ENCODE measurements at regions of chr9 and their contacts with region 1.

Region 1: GRCh38 chr9:76704593-76705204 is 59.5 kb upstream of the PCA3 start:
- DNase-seq: peak in 1 of 10 donors; percentile 61
- H3K4me3 ChIP-seq: peak overlapping the region in 1 of 59 donors; percentile 19
- H3K27ac ChIP-seq: peak overlapping the region in 9 of 59 donors; percentile 11 to 65 (median 37)
- H3K27me3 ChIP-seq: peaks cover 0 to 2% (median 0%) of the 10 kb centered on the region in 45 donors
- CTCF ChIP-seq: peak; percentile 66 to 93 (median 79)

Region 2: GRCh38 chr9:76393963-76394679 is 310.6 kb before region 1 on chr9 and contains the start of gene RFK:
- intact Hi-C with region 1: loop called in 1 of 2 experiments (anchors 10 kb)
- DNase-seq: peak; percentile 79 to 94 (median 88)
- H3K4me3 ChIP-seq: peak within 1 kb of the TSS; percentile 68 to 99 (median 92)
- H3K27ac ChIP-seq: peak within 1 kb of the TSS; percentile 60 to 98 (median 95)
- H3K27me3 ChIP-seq: no peaks in the 10 kb centered on the region
- CTCF ChIP-seq: peak in 55 of 56 donors; percentile 6 to 87 (median 60)
- total RNA-seq, gene RFK: 15.3 to 57.0 (median 37.1) TPM

Region 3: GRCh38 chr9:76403352-76403751 is 301.3 kb before region 1 on chr9:
- intact Hi-C with region 1: loop called (anchors 5 to 10 kb)
- DNase-seq: no peak
- H3K4me3 ChIP-seq: peak overlapping the region in 27 of 59 donors; percentile 2 to 38 (median 23)
- H3K27ac ChIP-seq: peak overlapping the region in 8 of 59 donors; percentile 4 to 42 (median 26)
- H3K27me3 ChIP-seq: no peaks in the 10 kb centered on the region
- CTCF ChIP-seq: peak; percentile 45 to 77 (median 63)

Region 4: DNA sequence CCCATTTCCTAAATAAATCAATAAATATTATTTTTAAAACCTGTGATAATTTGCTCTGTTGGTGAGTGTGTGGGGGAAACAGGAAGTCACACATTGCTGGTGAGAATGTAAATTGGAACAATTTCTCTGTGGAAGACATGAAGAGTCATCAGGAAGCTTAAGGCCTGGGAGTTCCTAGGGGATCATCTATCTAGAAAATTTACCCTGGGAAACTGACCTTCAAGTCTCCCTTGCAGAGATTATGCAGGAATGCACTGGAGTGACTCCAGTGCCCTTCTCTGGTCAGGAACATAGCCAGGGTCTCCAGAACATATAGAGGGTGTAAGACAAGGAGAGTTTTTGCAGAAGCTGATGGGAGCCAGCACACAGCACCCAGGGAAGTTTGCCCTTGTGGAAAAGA is 258.7 kb before region 1 on chr9:
- intact Hi-C with region 1: loop called (anchors 2 kb)
- DNase-seq: no peak
- H3K4me3 ChIP-seq: no peak overlapping the region
- H3K27ac ChIP-seq: no peak overlapping the region
- H3K27me3 ChIP-seq: no peaks in the 10 kb centered on the region
- CTCF ChIP-seq: no peak

Region 5: DNA sequence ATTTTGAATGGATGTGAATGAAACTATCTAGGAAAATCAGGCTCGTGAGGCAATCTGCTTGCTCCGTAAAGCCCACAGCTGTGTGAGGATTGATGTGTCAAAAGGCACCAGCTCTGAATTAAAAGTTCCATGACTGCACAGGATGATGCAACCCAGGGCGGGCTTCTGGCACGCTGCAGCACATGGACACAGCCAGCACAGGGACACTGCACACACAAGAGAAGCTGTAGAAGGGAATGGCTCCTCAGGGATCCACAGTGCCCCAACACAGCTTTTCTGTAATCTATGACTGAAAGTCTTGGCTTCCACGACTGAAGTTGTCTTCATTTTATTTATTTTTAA is 94.7 kb before region 1 on chr9:
- intact Hi-C with region 1: loop called in 1 of 2 experiments (anchors 10 kb)
- DNase-seq: peak in 8 of 10 donors; percentile 19 to 64 (median 40)
- H3K4me3 ChIP-seq: no peak overlapping the region
- H3K27ac ChIP-seq: peak overlapping the region in 16 of 59 donors; percentile 3 to 71 (median 14)
- H3K27me3 ChIP-seq: no peaks in the 10 kb centered on the region
- CTCF ChIP-seq: no peak

Region 6: DNA sequence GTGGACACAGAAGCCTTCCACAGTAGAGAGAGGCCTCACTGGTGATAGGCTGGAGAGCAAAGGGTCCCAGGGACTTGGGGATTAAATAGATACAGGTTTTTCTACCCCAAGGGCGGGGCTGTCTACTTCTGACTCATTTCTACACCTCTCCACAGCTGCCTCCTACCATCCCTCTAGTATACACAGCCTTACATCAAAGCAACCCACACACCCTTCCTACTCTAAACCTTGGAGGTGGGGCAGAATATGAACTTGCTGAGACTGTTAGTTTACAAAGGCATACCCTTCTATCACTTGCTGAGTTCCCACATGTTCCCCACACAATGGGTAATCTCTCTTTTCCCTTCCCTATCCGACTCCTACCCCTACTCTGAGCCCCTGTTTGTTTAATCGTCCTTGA is 39.6 kb after region 1 on chr9:
- intact Hi-C with region 1: no loop called
- DNase-seq: no peak
- H3K4me3 ChIP-seq: no peak overlapping the region
- H3K27ac ChIP-seq: no peak overlapping the region
- H3K27me3 ChIP-seq: no peaks in the 10 kb centered on the region
- CTCF ChIP-seq: no peak